ENCODE measurements at regions of chr3 and their contacts with region 1.

Region 1: DNA sequence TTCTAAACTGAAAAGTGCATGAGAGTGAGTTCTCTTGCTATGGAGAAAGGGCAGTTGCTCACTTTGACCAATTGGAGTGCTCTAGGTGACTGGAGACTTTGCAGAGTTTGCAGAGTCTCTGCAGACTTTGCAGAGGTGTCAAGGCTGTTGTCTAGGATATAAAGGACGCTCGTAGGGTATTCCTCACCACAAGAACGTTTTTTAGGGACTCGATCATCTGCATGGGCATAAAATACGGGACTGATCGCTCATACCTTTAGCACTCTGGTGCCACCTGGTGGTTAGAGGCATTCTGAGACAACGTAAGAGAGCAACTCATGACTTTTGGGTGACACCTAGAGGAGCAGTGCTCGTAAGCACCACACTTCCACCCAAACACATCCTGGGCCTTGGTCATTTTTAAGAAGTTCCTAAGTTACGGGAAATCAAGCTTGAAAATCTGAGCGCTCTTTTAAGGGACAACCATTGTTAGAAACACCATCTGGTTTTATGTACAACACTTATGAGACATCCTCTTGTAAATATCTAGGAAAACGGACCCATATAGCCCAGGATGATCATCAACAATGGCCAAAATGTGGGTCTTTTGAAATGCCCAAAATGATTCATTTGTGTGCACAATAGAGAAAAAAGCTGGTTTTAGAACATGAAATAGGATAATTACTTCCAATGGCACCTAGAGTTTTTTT is 51.6 kb upstream of the XCR1 start:
- DNase-seq: peak; percentile 86
- H3K4me3 Mint-ChIP-seq: no peak overlapping the region
- H3K27ac Mint-ChIP-seq: no peak overlapping the region
- H3K4me1 Mint-ChIP-seq: peaks cover 16% of the 10 kb centered on the region
- H3K27me3 Mint-ChIP-seq: no peaks in the 10 kb centered on the region
- CTCF ChIP-seq: peak; percentile 93

Region 2: GRCh38 chr3:45826321-45826720 is 252.5 kb before region 1 on chr3:
- CTCF ChIA-PET with region 1: no interaction called
- intact Hi-C with region 1: no loop called
- DNase-seq: no peak
- H3K4me3 Mint-ChIP-seq: no peak overlapping the region
- H3K27ac Mint-ChIP-seq: no peak overlapping the region
- H3K4me1 Mint-ChIP-seq: no peaks in the 10 kb centered on the region
- H3K27me3 Mint-ChIP-seq: no peaks in the 10 kb centered on the region
- CTCF ChIP-seq: no peak

Region 3: GRCh38 chr3:45841757-45842491 is 236.9 kb before region 1 on chr3 and contains the start of gene LZTFL1:
- CTCF ChIA-PET with region 1: no interaction called
- intact Hi-C with region 1: loop called (anchors 5 kb)
- DNase-seq: peak; percentile 90
- H3K4me3 Mint-ChIP-seq: peak within 1 kb of the TSS; percentile 95
- H3K27ac Mint-ChIP-seq: peak within 1 kb of the TSS; percentile 95
- H3K4me1 Mint-ChIP-seq: peaks cover 8% of the 10 kb centered on the region
- H3K27me3 Mint-ChIP-seq: peaks cover 38% of the 10 kb centered on the region
- CTCF ChIP-seq: no peak
- total RNA-seq, gene LZTFL1: 9.3 and 12.7 TPM in 2 replicates

Region 4: DNA sequence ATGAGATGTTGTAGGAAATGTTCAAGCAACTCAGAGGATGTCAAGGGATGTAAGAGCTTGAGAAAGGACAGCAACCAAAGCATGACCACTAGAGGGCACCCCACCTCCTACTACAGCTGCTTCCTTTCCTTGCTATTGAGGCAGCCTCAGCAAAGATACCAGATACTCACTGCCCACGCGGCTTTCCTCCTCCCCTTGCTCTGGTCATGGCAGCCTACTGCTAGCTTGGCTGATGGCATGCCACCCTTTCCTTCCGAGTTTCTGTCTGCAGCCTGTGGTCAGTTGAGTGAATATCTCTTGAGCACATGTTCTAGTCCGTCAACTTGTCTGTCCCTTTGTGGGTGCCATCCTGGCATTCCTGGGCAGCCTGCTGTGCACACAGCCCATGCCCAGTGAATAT is 140.0 kb before region 1 on chr3:
- CTCF ChIA-PET with region 1: interaction called, 14 read pairs
- intact Hi-C with region 1: loop called (anchors 1 kb)
- DNase-seq: peak; percentile 82
- H3K4me3 Mint-ChIP-seq: no peak overlapping the region
- H3K27ac Mint-ChIP-seq: no peak overlapping the region
- H3K4me1 Mint-ChIP-seq: peaks cover 8% of the 10 kb centered on the region
- H3K27me3 Mint-ChIP-seq: no peaks in the 10 kb centered on the region
- CTCF ChIP-seq: peak; percentile 54

Region 5: DNA sequence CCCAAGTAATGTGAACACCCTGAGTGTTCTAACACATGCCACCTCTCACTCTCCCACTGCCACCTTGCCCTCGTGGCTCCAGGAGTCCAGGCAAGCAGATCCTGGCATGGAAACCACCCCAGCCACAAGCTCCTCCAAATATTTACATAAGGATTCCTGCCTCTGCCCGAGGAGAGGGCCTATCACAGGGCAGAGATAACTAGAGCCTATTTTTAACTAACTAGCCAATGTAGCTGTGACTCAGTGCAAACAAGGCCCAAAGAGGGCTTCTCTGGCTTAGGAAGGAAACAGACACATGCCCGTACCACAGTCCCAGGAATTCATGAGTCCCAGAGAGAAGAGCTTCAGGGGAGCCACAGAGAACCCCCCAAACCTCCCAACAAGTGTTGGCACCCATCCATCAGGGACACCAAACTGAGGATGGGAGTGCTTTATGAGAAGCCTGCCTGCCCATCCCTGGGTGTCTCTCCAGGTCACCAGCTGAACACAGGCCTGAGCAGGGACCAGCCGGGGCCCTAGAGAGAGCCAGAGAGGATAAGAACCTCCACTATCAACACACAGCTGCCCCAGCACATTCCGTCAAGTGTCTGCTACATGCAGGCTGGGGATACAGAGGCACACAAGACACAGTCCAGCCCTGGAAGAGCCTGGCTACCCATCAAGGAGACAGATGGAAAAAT is 92.4 kb before region 1 on chr3:
- CTCF ChIA-PET with region 1: no interaction called
- intact Hi-C with region 1: loop called (anchors 5 kb)
- DNase-seq: peak; percentile 64
- H3K4me3 Mint-ChIP-seq: peak overlapping the region; percentile 12
- H3K27ac Mint-ChIP-seq: peak overlapping the region; percentile 37
- H3K4me1 Mint-ChIP-seq: peaks cover 28% of the 10 kb centered on the region
- H3K27me3 Mint-ChIP-seq: no peaks in the 10 kb centered on the region
- CTCF ChIP-seq: no peak

Region 6: DNA sequence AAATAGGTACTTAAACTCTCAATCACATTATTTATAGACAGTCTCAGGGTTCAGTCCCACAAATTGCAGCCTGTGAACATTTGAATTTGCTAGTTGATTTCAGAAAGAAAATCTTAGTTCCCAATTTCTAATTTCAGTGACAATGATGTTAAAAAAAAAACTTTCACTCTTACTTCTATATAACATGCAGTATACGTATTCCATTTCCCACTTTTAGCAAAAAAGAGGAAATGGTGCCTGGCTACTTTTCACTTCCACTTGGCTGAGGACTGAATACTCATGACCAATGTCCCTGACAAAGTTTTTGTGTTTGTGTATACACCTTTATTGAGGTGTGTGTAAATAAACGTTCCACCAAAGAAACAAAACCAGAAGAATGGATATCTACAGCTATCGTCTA is 19.4 kb before region 1 on chr3:
- CTCF ChIA-PET with region 1: no interaction called
- intact Hi-C with region 1: no loop called
- DNase-seq: no peak
- H3K4me3 Mint-ChIP-seq: no peak overlapping the region
- H3K27ac Mint-ChIP-seq: no peak overlapping the region
- H3K4me1 Mint-ChIP-seq: no peaks in the 10 kb centered on the region
- H3K27me3 Mint-ChIP-seq: peaks cover 89% of the 10 kb centered on the region
- CTCF ChIP-seq: no peak

Region 7: GRCh38 chr3:46368569-46368968 is 289.7 kb after region 1 on chr3:
- CTCF ChIA-PET with region 1: no interaction called
- intact Hi-C with region 1: loop called (anchors 5 kb)
- DNase-seq: peak; percentile 52
- H3K4me3 Mint-ChIP-seq: no peak overlapping the region
- H3K27ac Mint-ChIP-seq: no peak overlapping the region
- H3K4me1 Mint-ChIP-seq: peaks cover 8% of the 10 kb centered on the region
- H3K27me3 Mint-ChIP-seq: peaks cover 73% of the 10 kb centered on the region
- CTCF ChIP-seq: no peak